H1 (cell line): ENCODE measurements at regions of chr6 and their contacts with region 1.

Region 1: GRCh38 chr6:91276315-91276714 is 689.4 kb upstream of the MAP3K7 start:
- DNase-seq: no peak
- H3K4me3 ChIP-seq: no peak overlapping the region
- H3K27ac ChIP-seq: no peak overlapping the region
- H3K4me1 ChIP-seq: peaks cover 0 to 10% (median 4%) of the 10 kb centered on the region in 4 experiments; a peak in 3 of 7 replicates
- H3K27me3 ChIP-seq: no peaks in the 10 kb centered on the region
- CTCF ChIP-seq: peak in 2 of 3 experiments; percentile 67 to 69; a peak in 3 of 4 replicates
- EP300 ChIP-seq: no peak
- POLR2A ChIP-seq: no peak
- RAD21 ChIP-seq: peak; percentile 67 to 68

Region 2: DNA sequence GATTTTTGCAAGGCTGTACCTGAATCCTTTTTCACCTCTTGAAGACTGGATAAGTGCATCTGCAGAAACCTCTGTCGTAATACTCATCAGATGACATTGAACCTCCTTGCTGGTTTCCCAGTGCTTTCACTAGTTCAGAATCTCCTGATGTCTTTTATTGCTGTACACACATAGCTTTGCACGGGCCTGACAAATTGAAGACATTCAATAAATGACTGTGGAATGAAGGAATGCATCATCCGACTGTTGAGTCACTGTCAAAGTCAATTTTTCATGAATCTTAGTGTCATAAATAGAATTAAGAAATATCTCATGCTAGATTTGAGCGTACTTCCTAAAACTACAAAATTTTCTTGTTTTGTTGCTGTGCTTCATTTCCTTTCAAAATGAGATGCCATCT is 91.2 kb before region 1 on chr6:
- CTCF ChIA-PET with region 1: no interaction called
- POLR2A ChIA-PET with region 1: no interaction called
- DNase-seq: no peak
- H3K4me3 ChIP-seq: no peak overlapping the region
- H3K27ac ChIP-seq: no peak overlapping the region
- H3K4me1 ChIP-seq: peaks cover 0 to 3% (median 0%) of the 10 kb centered on the region in 4 experiments; a peak in 1 of 7 replicates
- H3K27me3 ChIP-seq: no peaks in the 10 kb centered on the region
- CTCF ChIP-seq: no peak
- EP300 ChIP-seq: no peak
- POLR2A ChIP-seq: no peak
- RAD21 ChIP-seq: no peak

Region 3: GRCh38 chr6:91240878-91241603 is 35.3 kb before region 1 on chr6:
- CTCF ChIA-PET with region 1: no interaction called
- POLR2A ChIA-PET with region 1: no interaction called
- DNase-seq: no peak
- H3K4me3 ChIP-seq: no peak overlapping the region
- H3K27ac ChIP-seq: no peak overlapping the region
- H3K4me1 ChIP-seq: no peaks in the 10 kb centered on the region
- H3K27me3 ChIP-seq: no peaks in the 10 kb centered on the region
- CTCF ChIP-seq: no peak
- EP300 ChIP-seq: no peak
- POLR2A ChIP-seq: no peak
- RAD21 ChIP-seq: no peak

Region 4: DNA sequence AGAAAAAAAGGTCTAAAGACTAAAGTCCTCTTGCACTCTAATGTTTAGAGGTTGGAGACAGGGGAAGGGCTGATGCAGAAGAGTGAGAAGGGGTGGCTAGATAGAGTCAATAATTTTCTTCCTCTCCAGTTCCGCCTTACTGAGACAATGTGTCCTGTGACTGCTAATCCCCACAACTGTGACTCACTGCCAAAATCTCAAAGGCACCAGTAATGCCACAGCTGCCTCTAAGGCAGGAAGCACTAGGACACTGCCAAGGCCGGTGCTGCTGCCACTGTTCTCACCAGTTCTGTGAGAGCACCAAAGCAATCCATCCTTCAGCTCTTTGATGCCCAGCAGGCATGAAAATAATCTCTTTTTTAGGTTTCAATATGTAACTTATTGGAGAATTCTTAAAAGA is 12.4 kb after region 1 on chr6:
- CTCF ChIA-PET with region 1: interaction called, 35 read pairs
- POLR2A ChIA-PET with region 1: no interaction called
- DNase-seq: no peak
- H3K4me3 ChIP-seq: no peak overlapping the region
- H3K27ac ChIP-seq: no peak overlapping the region
- H3K4me1 ChIP-seq: no peaks in the 10 kb centered on the region
- H3K27me3 ChIP-seq: peaks cover 6 to 44% (median 28%) of the 10 kb centered on the region in 4 experiments
- CTCF ChIP-seq: no peak
- EP300 ChIP-seq: no peak
- POLR2A ChIP-seq: no peak
- RAD21 ChIP-seq: no peak

Region 5: GRCh38 chr6:91330896-91331295 is 54.6 kb after region 1 on chr6:
- CTCF ChIA-PET with region 1: interaction called, 11 read pairs
- POLR2A ChIA-PET with region 1: no interaction called
- DNase-seq: no peak
- H3K4me3 ChIP-seq: no peak overlapping the region
- H3K27ac ChIP-seq: no peak overlapping the region
- H3K4me1 ChIP-seq: no peaks in the 10 kb centered on the region; a peak in 1 of 7 replicates
- H3K27me3 ChIP-seq: no peaks in the 10 kb centered on the region
- CTCF ChIP-seq: no peak
- EP300 ChIP-seq: no peak
- POLR2A ChIP-seq: no peak
- RAD21 ChIP-seq: no peak

Region 6: DNA sequence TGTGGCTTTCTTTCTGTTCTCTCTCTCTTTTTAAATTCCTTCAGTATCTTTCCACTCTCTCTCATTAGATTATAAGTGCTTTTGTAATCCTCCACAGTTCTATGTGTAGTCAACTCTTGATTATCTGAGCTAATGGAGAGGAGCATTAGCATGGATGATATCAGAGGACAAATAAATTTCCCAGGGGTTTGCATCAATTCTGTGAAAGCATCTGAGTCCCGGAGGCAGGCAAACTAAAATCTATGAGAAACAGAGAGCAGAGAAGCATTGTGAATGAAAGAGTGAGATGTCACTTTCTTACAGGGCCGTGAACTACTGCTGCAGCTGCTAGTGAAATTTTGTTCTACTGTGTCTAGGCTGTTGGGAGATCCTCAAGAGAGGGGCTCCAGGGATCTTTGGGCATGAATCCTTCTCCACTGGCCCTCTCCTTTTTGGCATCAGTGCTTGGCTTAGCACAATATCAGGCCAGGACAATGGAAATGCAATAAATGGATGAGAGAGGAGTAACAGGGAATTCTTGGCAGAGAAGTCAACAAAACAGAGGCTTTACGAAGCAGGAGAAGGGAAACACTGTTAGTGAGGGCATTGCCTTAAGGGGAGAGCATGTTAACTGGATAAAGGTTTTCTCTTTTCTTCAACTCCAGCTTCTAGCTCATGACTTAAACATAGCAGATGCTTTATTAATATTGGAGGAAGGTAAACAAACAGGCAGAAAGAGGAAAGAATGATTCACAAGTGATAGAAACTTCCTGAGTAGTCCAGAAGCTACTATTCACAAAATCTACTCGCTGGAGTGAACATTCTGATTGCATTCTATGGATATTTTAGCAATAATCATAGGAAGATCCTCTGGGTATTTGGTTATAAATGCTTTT is 157.6 kb after region 1 on chr6:
- CTCF ChIA-PET with region 1: no interaction called
- POLR2A ChIA-PET with region 1: no interaction called
- DNase-seq: no peak
- H3K4me3 ChIP-seq: no peak overlapping the region
- H3K27ac ChIP-seq: no peak overlapping the region
- H3K4me1 ChIP-seq: peaks cover 0 to 5% (median 2%) of the 10 kb centered on the region in 4 experiments; a peak in 2 of 7 replicates
- H3K27me3 ChIP-seq: peaks cover 0 to 4% (median 0%) of the 10 kb centered on the region in 4 experiments; a peak in 1 of 7 replicates
- CTCF ChIP-seq: no peak
- EP300 ChIP-seq: no peak
- POLR2A ChIP-seq: no peak
- RAD21 ChIP-seq: no peak